ENCODE measurements at regions of chr1 and their contacts with region 1.

Region 1: GRCh38 chr1:40901886-40902852 is 40.0 kb upstream of the CITED4 start:
- DNase-seq: no peak
- ATAC-seq: peak; percentile 27; the same call in 2 of the 3 replicates
- H3K4me3 ChIP-seq: no peak overlapping the region
- H3K27ac ChIP-seq: no peak overlapping the region
- H3K4me1 ChIP-seq: peaks cover 32% of the 10 kb centered on the region
- H3K27me3 ChIP-seq: peaks cover 1 to 2% of the 10 kb centered on the region in 2 experiments; a peak in 2 of 5 replicates
- CTCF ChIP-seq: no peak
- EP300 ChIP-seq: no peak
- POLR2A ChIP-seq: no peak
- RAD21 ChIP-seq: no peak

Region 2: DNA sequence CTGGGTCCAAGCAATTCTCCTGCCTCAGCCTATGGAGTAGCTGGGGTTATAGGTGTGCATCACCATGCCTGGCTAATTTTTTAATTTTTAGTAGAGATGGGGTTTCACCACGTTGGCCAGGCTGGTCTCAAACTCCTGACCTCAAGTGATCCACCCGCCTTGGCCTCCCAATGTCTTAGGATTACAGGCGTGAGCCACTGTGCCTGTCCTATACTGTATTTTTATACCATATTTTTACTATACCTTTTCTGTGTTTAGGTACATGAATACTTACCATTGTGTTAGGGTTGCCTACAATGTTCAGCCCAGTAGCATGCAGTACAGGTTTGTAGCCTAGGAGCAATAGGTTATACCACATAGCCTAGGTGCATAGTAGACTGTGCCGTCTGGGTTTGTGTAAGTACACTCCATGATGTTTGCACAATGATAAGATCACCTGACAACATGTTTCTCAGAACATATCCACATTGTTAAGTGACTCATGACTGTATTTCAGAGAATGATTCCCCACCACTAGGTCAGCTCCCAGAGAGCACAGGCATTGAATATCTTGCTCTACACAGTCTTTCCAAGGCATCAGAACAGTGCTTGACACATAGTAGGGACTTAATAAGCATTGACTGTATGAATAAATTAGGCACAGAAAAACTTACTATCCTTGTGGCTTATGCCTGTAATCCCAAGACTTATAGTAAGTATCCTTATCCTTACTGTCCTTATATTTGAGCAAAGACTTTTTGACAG is 33.9 kb before region 1 on chr1:
- CTCF ChIA-PET with region 1: no interaction called
- POLR2A ChIA-PET with region 1: interaction called, 3 read pairs
- in situ Hi-C with region 1: no loop called
- intact Hi-C with region 1: loop called (anchors 5 kb)
- DNase-seq: peak; percentile 87
- ATAC-seq: peak; percentile 77
- H3K4me3 ChIP-seq: no peak overlapping the region
- H3K27ac ChIP-seq: no peak overlapping the region
- H3K4me1 ChIP-seq: peaks cover 35% of the 10 kb centered on the region
- H3K27me3 ChIP-seq: no peaks in the 10 kb centered on the region
- CTCF ChIP-seq: no peak
- EP300 ChIP-seq: no peak
- POLR2A ChIP-seq: no peak
- RAD21 ChIP-seq: no peak

Region 3: GRCh38 chr1:40919475-40920011 is 17.4 kb after region 1 on chr1:
- CTCF ChIA-PET with region 1: no interaction called
- POLR2A ChIA-PET with region 1: no interaction called
- in situ Hi-C with region 1: no loop called
- intact Hi-C with region 1: loop called (anchors 1 kb)
- DNase-seq: peak; percentile 97
- ATAC-seq: peak; percentile 96
- H3K4me3 ChIP-seq: peak overlapping the region in 1 of 3 experiments; percentile 8; a peak in 2 of 6 replicates
- H3K27ac ChIP-seq: peak overlapping the region; percentile 91
- H3K4me1 ChIP-seq: peaks cover 96% of the 10 kb centered on the region
- H3K27me3 ChIP-seq: no peaks in the 10 kb centered on the region
- CTCF ChIP-seq: peak; percentile 36; the same call in 1 of the 2 replicates
- EP300 ChIP-seq: peak; percentile 96 to 99
- POLR2A ChIP-seq: peak; percentile 51 to 79; a peak in 3 of 4 replicates
- RAD21 ChIP-seq: peak; percentile 63

Region 4: DNA sequence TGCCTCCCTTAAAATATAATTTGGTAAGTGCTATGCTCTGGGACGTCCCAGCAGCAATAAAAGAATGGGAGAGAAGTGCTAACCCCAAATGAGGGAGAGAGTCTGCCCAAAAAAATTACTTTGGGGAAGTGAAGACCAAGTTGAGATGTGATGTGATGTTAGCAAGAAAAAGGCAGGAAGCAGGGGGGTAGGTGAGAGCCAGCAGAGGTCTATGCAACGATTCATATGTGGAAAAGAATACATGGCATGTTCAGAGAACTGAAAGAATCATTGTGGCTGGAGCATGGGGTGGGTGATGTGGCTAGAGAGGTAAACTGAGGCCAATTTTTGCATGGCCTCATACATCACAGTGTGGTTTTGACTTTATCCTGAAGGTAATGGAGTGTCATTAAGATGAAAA is 71.7 kb after region 1 on chr1:
- CTCF ChIA-PET with region 1: no interaction called
- POLR2A ChIA-PET with region 1: no interaction called
- in situ Hi-C with region 1: no loop called
- intact Hi-C with region 1: no loop called
- DNase-seq: no peak
- ATAC-seq: no peak
- H3K4me3 ChIP-seq: no peak overlapping the region
- H3K27ac ChIP-seq: no peak overlapping the region
- H3K4me1 ChIP-seq: peaks cover 5% of the 10 kb centered on the region; the same call in 1 of the 2 replicates
- H3K27me3 ChIP-seq: peaks cover 0 to 6% of the 10 kb centered on the region in 2 experiments; a peak in 1 of 5 replicates
- CTCF ChIP-seq: no peak
- EP300 ChIP-seq: no peak
- POLR2A ChIP-seq: no peak
- RAD21 ChIP-seq: no peak

Region 5: GRCh38 chr1:40997096-40997495 is 94.9 kb after region 1 on chr1:
- CTCF ChIA-PET with region 1: no interaction called
- POLR2A ChIA-PET with region 1: no interaction called
- in situ Hi-C with region 1: no loop called
- intact Hi-C with region 1: no loop called
- DNase-seq: no peak
- ATAC-seq: no peak
- H3K4me3 ChIP-seq: no peak overlapping the region
- H3K27ac ChIP-seq: no peak overlapping the region
- H3K4me1 ChIP-seq: no peaks in the 10 kb centered on the region
- H3K27me3 ChIP-seq: no peaks in the 10 kb centered on the region
- CTCF ChIP-seq: no peak
- EP300 ChIP-seq: no peak
- POLR2A ChIP-seq: no peak
- RAD21 ChIP-seq: no peak

Region 6: DNA sequence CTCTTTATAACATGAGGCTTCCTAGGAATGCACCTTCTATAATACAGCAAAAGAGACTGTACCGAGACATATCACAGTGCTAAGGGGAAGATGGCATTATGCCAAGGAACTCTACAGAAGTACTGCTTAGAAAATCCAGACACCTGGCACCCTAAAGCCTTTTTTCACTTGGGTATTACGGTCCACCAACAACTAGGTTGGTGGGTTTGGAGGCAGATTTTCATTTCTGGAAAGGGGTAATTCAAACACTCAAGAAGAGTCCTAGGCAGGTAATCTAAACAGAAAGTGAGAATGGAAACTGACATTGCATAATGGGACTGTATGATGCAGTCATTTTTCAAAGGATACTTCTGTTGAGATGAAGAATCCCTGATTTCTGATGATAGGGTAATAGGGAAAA is 320.3 kb after region 1 on chr1:
- CTCF ChIA-PET with region 1: no interaction called
- POLR2A ChIA-PET with region 1: no interaction called
- in situ Hi-C with region 1: no loop called
- intact Hi-C with region 1: no loop called
- DNase-seq: no peak
- ATAC-seq: no peak
- H3K4me3 ChIP-seq: no peak overlapping the region
- H3K27ac ChIP-seq: no peak overlapping the region
- H3K4me1 ChIP-seq: peaks cover 21% of the 10 kb centered on the region
- H3K27me3 ChIP-seq: no peaks in the 10 kb centered on the region; a peak in 1 of 5 replicates
- CTCF ChIP-seq: no peak
- EP300 ChIP-seq: no peak
- POLR2A ChIP-seq: no peak
- RAD21 ChIP-seq: no peak